AG04449 (cell line): ENCODE measurements at regions of chr12 and their contacts with region 1.

Region 1: GRCh38 chr12:38316391-38317129 is at the start of gene ALG10B:
- DNase-seq: peak; percentile 79
- H3K4me3 ChIP-seq: peak within 1 kb of the TSS; percentile 86
- CTCF ChIP-seq: peak; percentile 9

Region 2: GRCh38 chr12:38138225-38139221 is 178.0 kb before region 1 on chr12:
- CTCF ChIA-PET with region 1: interaction called, 17 read pairs
- POLR2A ChIA-PET with region 1: no interaction called
- DNase-seq: peak; percentile 2
- H3K4me3 ChIP-seq: peak overlapping the region; percentile 39
- CTCF ChIP-seq: peak; percentile 80